HCT116 (cell line): ENCODE measurements at regions of chr21 and their contacts with region 1.

Region 1: GRCh38 chr21:31078796-31079195 is 40.5 kb upstream of the KRTAP19-8 start:
- DNase-seq: no peak
- ATAC-seq: no peak
- H3K4me3 ChIP-seq: no peak overlapping the region
- H3K27ac ChIP-seq: no peak overlapping the region
- H3K4me1 ChIP-seq: no peaks in the 10 kb centered on the region
- H3K27me3 ChIP-seq: no peaks in the 10 kb centered on the region; the same call in 1 of the 2 replicates
- CTCF ChIP-seq: no peak
- POLR2A ChIP-seq: no peak
- RAD21 ChIP-seq: no peak

Region 2: DNA sequence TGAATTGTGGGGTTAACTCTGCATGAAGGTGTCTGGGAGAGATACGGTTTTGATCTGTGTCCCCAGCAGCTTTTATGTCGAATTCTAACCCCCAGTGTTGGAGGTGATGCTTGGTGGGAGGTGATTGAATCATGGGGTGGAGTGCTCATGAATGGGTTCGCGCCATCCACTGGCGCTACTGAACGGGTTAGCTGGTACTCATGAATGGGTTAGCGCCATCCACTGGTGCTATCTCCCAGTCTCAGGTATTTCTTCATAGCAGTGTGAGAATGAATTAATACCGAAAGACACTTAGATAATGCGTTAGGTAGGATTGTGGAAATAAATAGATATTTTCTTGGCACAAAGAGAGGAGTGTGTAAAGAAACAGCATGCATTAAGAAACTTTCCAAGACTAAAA is 830.0 kb before region 1 on chr21:
- CTCF ChIA-PET with region 1: no interaction called
- POLR2A ChIA-PET with region 1: no interaction called
- RAD21 ChIA-PET with region 1: no interaction called
- intact Hi-C with region 1: loop called (anchors 5 kb)
- DNase-seq: no peak
- ATAC-seq: no peak
- H3K4me3 ChIP-seq: no peak overlapping the region
- H3K27ac ChIP-seq: no peak overlapping the region
- H3K4me1 ChIP-seq: no peaks in the 10 kb centered on the region
- H3K27me3 ChIP-seq: no peaks in the 10 kb centered on the region
- CTCF ChIP-seq: no peak
- POLR2A ChIP-seq: no peak
- RAD21 ChIP-seq: no peak